Gastrocnemius medialis (tissue), 4 donors: ENCODE measurements at regions of chr2 and their contacts with region 1.

Region 1: GRCh38 chr2:54866868-54867267 is 143.4 kb downstream of the EML6 start:
- DNase-seq: no peak
- ATAC-seq: no peak
- H3K4me3 ChIP-seq: no peak overlapping the region
- H3K27ac ChIP-seq: no peak overlapping the region
- H3K4me1 ChIP-seq: peaks cover 0 to 4% of the 10 kb centered on the region in 2 donors
- H3K27me3 ChIP-seq: no peaks in the 10 kb centered on the region
- CTCF ChIP-seq: no peak
- POLR2A ChIP-seq: no peak

Region 2: DNA sequence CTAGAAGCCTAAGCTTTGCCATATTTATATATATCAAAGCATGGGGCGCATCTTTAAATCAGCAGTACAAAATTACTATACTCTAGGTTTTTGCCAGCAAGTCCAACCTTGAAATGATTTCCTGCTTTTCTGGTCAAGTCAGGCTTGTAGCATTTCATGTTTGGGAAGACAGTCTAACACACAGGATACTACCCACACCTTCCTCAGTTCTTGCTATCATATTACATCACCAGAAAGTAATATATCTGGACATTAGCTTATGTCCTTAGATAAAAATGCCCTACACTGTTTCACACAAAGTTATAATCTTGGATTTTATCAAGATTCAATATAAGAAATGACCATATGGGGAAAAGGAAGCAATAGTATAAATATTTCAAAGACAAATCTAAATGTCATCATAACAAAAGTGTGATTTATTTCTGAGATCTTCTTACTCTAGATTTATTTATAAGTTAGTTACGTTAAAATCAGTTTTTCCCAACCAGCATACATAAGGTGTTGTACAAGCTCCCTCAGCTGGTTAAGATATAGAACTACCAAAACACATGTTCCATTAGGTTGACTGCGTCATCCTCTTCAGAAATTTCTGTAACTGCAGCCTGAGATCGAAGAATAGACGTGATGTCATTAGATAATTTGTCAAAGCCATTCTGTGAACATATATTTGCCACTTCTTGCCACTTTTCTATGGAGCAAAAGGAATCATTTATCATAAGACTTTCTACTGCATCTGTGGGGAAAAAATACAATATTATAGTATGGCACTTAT is 308.6 kb after region 1 on chr2:
- in situ Hi-C with region 1: loop called in 1 of 4 experiments (anchors 25 kb)
- intact Hi-C with region 1: no loop called
- DNase-seq: no peak
- ATAC-seq: peak; percentile 89 to 90
- H3K4me3 ChIP-seq: no peak overlapping the region
- H3K27ac ChIP-seq: no peak overlapping the region
- H3K4me1 ChIP-seq: peaks cover 0 to 6% of the 10 kb centered on the region in 2 donors
- H3K27me3 ChIP-seq: no peaks in the 10 kb centered on the region
- CTCF ChIP-seq: peak; percentile 16 to 61 (median 58)
- POLR2A ChIP-seq: no peak